ENCODE measurements at regions of chr7 and their contacts with region 1.

Region 1: DNA sequence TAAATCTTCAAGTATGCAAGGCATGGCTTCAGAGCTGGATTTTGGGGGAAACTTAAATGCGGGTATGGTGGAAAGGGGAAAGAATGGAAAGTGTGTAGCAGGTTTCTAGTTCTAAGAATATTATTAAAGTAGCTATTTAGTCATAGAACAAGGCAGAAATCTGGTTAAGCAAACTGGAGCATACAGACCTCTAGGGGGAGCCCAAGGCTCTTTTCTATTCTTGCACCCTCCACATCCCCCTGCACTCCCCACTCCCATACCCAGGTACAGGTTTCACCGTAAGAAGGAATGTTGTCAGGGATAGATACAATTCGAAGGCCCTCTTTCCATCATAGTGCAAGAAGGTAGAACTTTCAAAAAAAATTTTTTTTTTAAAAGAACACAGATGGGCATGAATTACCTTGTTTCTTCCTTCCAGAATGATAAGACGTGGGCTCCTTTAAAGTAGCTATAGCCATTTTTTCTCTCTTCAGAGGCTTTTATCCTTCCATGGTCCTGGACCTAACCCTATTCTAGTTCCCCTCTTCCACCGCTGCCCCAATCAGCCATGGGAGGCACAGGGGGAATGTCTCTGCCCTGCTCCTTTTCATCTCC is 41.5 kb upstream of the SMIM30 start:
- DNase-seq: peak in 1 of 2 experiments; percentile 14
- H3K4me3 ChIP-seq: no peak overlapping the region
- H3K27ac ChIP-seq: no peak overlapping the region
- H3K4me1 ChIP-seq: no peaks in the 10 kb centered on the region
- H3K27me3 ChIP-seq: no peaks in the 10 kb centered on the region
- CTCF ChIP-seq: peak; percentile 70

Region 2: DNA sequence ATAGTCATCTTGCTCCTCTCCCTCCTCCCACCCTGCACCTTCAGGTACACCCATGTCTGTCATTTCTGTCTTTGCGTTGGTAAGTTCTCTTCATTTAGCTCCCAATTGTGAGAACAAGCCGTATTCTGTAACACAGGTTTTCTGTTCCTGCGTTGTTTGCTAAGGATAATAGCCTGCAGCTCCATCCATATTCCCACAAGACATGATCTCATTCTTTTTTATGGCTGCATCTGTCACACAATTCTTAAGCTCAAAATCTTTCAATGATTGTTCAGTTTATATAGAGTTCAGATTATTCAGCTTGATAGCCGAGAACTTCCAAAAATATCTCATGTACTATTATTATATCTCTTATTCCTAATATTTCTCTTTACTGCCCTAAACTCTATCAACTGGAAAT is 353.7 kb before region 1 on chr7:
- CTCF ChIA-PET with region 1: no interaction called
- POLR2A ChIA-PET with region 1: no interaction called
- intact Hi-C with region 1: no loop called
- DNase-seq: no peak
- H3K4me3 ChIP-seq: no peak overlapping the region
- H3K27ac ChIP-seq: no peak overlapping the region
- H3K4me1 ChIP-seq: no peaks in the 10 kb centered on the region
- H3K27me3 ChIP-seq: no peaks in the 10 kb centered on the region
- CTCF ChIP-seq: no peak

Region 3: DNA sequence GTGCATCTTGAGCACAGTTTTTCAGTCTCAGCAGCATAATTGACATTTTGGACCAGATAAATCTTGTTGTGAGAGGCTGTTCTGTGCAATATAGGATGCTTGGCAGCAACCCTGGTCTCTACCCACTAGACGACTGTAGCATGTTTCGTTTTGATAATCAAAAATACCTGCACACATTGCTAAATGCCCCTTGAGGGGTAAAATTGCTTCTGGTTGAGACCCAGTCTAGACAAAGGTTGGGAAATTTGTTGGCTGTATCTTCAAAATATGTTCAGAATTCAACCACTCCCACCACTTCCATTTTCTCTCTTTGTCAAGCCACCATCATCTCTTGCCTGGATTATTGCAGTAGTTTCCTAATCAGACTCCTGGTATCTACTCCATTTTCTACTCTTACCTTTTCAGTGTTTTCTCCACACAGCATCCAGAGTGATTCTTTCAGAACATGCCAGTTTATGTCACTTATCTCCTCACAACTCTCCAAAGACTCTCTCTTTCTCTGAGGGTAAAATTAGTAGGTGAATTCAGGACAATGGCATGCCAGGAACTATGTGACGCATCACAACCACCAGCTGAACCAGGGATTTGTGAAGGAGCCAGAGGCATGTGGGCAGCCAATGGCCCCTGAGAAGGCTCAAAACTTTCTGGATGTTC is 164.5 kb before region 1 on chr7:
- CTCF ChIA-PET with region 1: no interaction called
- POLR2A ChIA-PET with region 1: no interaction called
- intact Hi-C with region 1: no loop called
- DNase-seq: no peak
- H3K4me3 ChIP-seq: no peak overlapping the region
- H3K27ac ChIP-seq: no peak overlapping the region
- H3K4me1 ChIP-seq: no peaks in the 10 kb centered on the region
- H3K27me3 ChIP-seq: no peaks in the 10 kb centered on the region
- CTCF ChIP-seq: no peak

Region 4: GRCh38 chr7:113015032-113015645 is 144.7 kb before region 1 on chr7:
- CTCF ChIA-PET with region 1: interaction called, 3 read pairs
- POLR2A ChIA-PET with region 1: no interaction called
- intact Hi-C with region 1: loop called (anchors 10 kb)
- DNase-seq: no peak
- H3K4me3 ChIP-seq: no peak overlapping the region
- H3K27ac ChIP-seq: no peak overlapping the region
- H3K4me1 ChIP-seq: no peaks in the 10 kb centered on the region
- H3K27me3 ChIP-seq: no peaks in the 10 kb centered on the region
- CTCF ChIP-seq: peak; percentile 70

Region 5: DNA sequence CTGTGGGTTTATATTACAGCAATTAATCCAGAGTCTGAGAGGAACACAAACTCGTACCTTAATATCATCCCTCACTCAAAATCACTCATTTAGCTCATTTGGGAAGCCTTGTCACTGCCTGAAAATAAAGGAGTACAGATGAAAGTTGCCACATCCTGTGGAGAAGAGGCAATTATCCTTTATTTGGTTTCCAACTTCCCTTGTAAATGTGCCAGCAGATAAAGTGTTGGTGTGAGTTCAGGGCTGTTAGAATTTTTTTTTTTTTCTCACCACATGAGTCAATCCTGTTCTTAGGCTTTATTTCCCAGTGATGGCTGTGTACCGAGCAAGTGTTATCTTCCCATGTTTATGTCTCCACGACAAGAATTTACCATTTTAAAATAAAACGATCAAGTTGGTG is 57.5 kb after region 1 on chr7:
- CTCF ChIA-PET with region 1: no interaction called
- POLR2A ChIA-PET with region 1: no interaction called
- intact Hi-C with region 1: no loop called
- DNase-seq: no peak
- H3K4me3 ChIP-seq: no peak overlapping the region
- H3K27ac ChIP-seq: no peak overlapping the region
- H3K4me1 ChIP-seq: no peaks in the 10 kb centered on the region
- H3K27me3 ChIP-seq: no peaks in the 10 kb centered on the region
- CTCF ChIP-seq: no peak

Region 6: DNA sequence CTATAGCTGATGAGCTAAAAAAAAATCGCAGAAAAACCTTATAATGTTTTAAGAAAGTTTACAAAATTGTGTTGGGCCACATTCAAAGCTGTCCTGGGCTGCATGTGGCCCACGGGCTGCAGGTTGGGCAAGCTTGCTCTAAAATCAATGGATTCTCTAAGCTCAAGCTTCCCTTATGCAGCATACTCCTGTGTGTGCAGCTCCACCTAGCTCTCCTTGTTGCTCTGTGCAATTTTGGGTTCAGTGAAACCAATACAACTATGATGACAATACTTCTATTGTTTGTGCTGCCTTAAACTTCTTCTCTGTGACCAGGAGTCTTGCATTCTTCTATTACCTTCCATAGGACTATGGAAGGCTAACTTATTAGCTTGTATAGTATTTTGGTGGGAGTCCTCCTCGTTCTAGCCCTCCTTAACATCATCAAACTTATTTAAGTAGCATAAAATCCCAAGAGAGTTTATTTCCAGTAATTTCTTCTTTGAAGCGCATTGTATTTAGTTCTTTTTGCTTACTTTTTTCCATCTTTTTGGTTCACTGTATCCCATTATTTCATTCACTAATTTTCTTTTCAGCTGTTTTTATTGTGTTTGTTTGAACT is 129.4 kb after region 1 on chr7:
- CTCF ChIA-PET with region 1: interaction called, 5 read pairs
- POLR2A ChIA-PET with region 1: no interaction called
- intact Hi-C with region 1: loop called (anchors 5 kb)
- DNase-seq: no peak
- H3K4me3 ChIP-seq: no peak overlapping the region
- H3K27ac ChIP-seq: no peak overlapping the region
- H3K4me1 ChIP-seq: no peaks in the 10 kb centered on the region; the same call in 1 of the 2 replicates
- H3K27me3 ChIP-seq: no peaks in the 10 kb centered on the region
- CTCF ChIP-seq: 0 out of 2 replicates have a peak, but pooled peaks have one; percentile 27

Region 7: GRCh38 chr7:113622796-113623195 is 463.0 kb after region 1 on chr7:
- CTCF ChIA-PET with region 1: no interaction called
- POLR2A ChIA-PET with region 1: no interaction called
- intact Hi-C with region 1: no loop called
- DNase-seq: no peak
- H3K4me3 ChIP-seq: no peak overlapping the region
- H3K27ac ChIP-seq: no peak overlapping the region
- H3K4me1 ChIP-seq: no peaks in the 10 kb centered on the region
- H3K27me3 ChIP-seq: no peaks in the 10 kb centered on the region
- CTCF ChIP-seq: no peak

Region 8: GRCh38 chr7:113698556-113699220 is 538.8 kb after region 1 on chr7:
- CTCF ChIA-PET with region 1: interaction called, 3 read pairs
- POLR2A ChIA-PET with region 1: no interaction called
- intact Hi-C with region 1: loop called (anchors 2 kb)
- DNase-seq: no peak
- H3K4me3 ChIP-seq: no peak overlapping the region
- H3K27ac ChIP-seq: no peak overlapping the region
- H3K4me1 ChIP-seq: no peaks in the 10 kb centered on the region
- H3K27me3 ChIP-seq: no peaks in the 10 kb centered on the region
- CTCF ChIP-seq: peak; percentile 76